ENCODE measurements at regions of chr4 and their contacts with region 1.

Region 1: DNA sequence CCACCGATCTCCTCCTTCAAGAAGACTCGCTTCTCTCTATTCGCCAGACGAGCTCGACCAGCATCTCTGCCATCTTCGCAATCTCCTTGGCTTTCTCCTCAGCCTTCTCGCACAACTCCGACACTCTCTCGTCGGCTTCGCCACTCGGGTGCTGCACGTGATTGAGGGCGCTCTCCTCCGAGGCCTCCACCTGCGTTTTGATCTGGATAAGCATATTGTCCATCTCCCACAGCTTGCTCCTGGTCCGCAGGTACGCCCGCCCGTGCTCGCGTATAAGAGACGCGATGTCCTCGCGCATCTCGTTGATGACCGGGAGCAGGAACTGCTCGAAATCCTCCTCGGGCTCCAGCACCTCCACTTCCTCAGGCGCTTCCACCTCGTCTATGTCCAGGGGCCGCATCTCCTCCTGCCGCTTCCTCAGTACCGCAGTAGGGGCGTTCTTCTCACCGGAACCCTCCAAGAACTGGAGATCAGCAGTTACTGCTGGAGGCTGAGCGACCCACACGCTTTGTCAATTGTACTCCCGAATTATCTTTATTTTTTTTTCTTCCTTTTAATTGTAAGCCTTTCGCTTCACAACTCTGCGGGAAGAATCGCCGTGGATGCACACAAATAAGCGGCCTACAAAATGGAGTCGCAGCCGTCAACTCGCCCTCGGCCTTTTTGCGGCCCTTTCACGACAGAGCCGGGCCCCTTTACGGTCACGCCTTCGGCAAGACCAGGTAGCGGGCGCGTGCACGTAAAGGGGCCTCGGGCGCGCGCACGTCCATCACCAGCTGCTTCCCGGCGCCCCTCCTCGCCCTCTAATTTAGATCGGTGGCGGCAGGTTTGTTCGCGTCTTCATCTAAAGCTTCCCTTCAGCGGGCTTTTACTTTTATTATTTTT is at the start of gene MRFAP1L1:
- DNase-seq: peak; percentile 98
- H3K4me3 Mint-ChIP-seq: peak within 1 kb of the TSS; percentile 98
- H3K27ac Mint-ChIP-seq: peak within 1 kb of the TSS; percentile 98
- H3K4me1 Mint-ChIP-seq: peaks cover 49% of the 10 kb centered on the region
- H3K27me3 Mint-ChIP-seq: no peaks in the 10 kb centered on the region
- total RNA-seq, gene MRFAP1L1: 37.0 to 38.6 TPM

Region 2: DNA sequence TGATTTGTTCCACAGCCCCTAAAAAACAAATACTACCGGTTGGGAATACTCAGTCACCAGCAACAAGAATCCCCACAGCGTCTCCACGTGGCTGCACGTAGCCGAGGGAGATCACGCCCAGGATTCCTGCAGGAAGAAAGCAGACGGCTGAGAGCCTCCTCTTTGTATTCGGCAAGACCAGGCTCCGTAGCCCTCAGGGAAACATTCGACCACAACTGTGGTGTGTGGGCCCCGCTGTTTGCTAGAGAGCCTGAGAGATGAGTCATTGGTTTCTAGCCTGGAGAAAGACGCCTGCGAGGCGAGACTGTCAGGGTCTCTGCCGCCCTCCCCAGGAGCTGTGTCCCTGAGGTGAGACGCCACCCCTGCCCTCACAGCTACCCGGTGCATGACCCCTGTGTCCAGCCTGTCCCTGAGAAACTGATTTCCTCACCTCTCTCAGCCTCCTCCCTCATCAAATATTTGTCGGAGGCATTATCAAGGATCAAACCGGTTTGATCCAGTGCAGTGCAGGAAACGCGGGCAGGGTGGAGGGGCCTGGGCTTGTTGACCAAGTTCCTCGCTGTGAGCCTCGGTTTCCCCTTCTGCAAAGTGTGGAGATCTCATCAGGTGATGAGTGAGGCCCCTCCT is 20.5 kb before region 1 on chr4:
- CTCF ChIA-PET with region 1: interaction called, 18 read pairs
- intact Hi-C with region 1: loop called (anchors 2 kb)
- DNase-seq: peak; percentile 89
- H3K4me3 Mint-ChIP-seq: peak overlapping the region; percentile 51
- H3K27ac Mint-ChIP-seq: no peak overlapping the region
- H3K4me1 Mint-ChIP-seq: peaks cover 61% of the 10 kb centered on the region
- H3K27me3 Mint-ChIP-seq: no peaks in the 10 kb centered on the region

Region 3: DNA sequence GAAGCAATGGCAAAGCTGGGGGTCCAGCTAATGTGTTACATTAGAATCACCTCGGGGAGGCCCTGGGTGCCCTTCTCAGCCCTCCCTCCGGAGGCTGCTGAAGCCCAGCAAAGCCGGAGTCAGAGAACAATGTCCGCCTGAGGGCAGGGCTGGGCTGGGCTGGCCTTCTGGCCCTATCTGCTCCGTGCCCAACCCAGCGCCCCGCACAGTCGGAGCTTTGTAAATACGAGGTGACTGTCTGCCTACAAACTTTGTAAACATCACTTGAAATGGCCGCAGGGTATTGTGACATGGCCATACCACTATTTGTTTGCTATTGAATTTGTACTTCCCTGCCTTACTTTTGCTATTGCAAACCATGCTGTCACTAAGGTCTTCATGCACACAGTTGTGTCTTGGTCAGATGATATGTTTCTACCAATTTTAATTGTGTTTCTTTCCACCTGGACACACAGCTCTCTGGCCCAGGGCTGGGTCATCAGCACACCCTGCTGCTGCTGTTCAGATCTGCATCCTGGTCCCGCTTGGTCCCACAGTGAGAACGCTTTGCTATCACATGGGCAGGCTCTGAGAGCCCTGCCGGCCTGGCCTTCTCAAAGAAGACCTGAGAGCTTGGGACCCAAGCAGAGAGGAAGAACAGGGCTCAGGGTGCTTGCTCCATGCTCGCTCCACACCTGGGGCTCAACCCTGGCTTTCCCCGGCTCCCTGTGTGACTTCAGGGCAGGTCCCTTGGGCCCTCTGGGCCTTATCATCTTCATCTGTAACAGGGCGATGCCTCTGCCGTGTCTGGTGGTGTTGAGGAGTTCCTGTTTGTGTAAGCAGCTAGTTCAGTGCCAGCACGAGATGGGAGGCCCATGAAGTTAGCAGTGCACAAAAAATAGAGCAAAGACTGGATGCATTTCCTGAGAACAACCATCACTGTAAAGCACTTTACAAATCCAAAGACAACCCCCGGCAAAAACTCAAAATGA is 13.5 kb before region 1 on chr4:
- CTCF ChIA-PET with region 1: interaction called, 18 read pairs
- intact Hi-C with region 1: loop called (anchors 1 kb)
- DNase-seq: peak; percentile 63
- H3K4me3 Mint-ChIP-seq: peak overlapping the region; percentile 65
- H3K27ac Mint-ChIP-seq: peak overlapping the region; percentile 96
- H3K4me1 Mint-ChIP-seq: peaks cover 82% of the 10 kb centered on the region
- H3K27me3 Mint-ChIP-seq: no peaks in the 10 kb centered on the region

Region 4: DNA sequence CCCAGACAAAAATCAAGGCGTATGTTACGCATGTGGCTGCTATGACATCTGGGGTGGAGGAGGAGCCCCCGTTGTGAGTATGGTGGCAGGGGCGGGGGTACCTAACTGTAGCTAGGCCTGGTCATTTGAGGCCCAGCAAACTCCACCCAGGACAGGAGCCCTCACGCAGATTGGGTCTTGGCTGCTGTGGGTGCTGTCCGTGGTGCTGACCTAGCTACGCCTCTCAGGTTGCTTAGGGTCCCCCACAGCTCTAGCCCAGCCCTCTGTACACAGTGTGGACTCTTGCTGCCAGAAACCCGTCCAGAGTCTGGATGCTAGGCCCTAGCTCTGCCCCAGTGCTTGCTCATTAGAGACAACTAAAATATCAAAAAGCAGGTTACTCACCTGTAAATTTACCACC is 872.0 kb after region 1 on chr4:
- CTCF ChIA-PET with region 1: no interaction called
- intact Hi-C with region 1: no loop called
- DNase-seq: peak; percentile 29
- H3K4me3 Mint-ChIP-seq: no peak overlapping the region
- H3K27ac Mint-ChIP-seq: no peak overlapping the region
- H3K4me1 Mint-ChIP-seq: no peaks in the 10 kb centered on the region
- H3K27me3 Mint-ChIP-seq: no peaks in the 10 kb centered on the region